Naive thymus-derived CD4-positive, alpha-beta T cell (primary cell): ENCODE measurements at regions of chr17 and their contacts with region 1.

Region 1: GRCh38 chr17:33964344-33964979 is 290.6 kb upstream of the CCL2 start:
- DNase-seq: peak in 3 of 9 donors; percentile 2 to 16 (median 6)
- ATAC-seq: peak; percentile 72
- H3K4me3 ChIP-seq: peak overlapping the region; percentile 41
- H3K4me3 Mint-ChIP-seq: peak overlapping the region in 9 of 10 donors; percentile 44 to 76 (median 58)
- H3K27ac ChIP-seq: no peak overlapping the region
- H3K27ac Mint-ChIP-seq: peak overlapping the region in 3 of 9 donors; percentile 23 to 74 (median 63)
- H3K4me1 ChIP-seq: peaks cover 12 to 23% of the 10 kb centered on the region in 2 donors
- H3K4me1 Mint-ChIP-seq: peaks cover 18 to 55% (median 24%) of the 10 kb centered on the region in 7 donors
- H3K27me3 ChIP-seq: no peaks in the 10 kb centered on the region
- H3K27me3 Mint-ChIP-seq: peaks cover 8 to 16% (median 10%) of the 10 kb centered on the region in 5 donors

Region 2: DNA sequence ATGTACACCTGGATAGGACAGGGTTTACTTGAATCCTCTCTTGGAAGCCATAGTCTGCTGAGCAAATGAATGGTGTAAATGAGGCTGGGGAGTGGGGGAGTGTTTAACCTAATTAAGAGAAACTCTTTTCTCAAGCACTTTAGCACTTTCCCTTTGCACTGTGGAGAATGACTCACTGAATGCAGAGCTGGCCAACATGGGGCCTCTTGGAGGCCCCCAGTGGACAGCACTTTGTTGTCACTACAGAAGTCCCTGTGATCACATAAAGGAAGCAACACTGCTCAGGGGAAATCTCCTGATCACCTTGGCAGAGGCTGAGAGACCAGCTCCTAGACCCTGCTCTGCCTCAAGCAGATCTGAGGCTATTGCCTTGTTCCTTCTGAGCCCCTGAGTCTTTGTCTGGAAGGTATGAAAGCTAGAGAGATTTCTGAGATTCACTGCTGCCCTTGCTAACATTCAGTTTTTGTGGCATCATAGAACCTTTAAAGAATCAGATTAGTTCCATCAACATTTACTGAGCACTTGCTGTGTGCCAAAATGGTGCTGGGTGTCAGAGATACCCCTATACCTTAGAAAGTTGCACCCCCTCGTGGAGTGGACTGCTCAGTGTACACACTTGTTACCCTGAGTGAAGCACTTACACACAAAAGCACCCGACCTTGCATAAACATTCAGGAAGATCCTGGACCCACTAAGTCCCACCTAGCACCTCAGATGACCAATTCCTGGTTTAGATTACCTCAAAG is 60.5 kb after region 1 on chr17:
- CTCF ChIA-PET with region 1: no interaction called
- POLR2A ChIA-PET with region 1: no interaction called
- intact Hi-C with region 1: loop called in 1 of 2 experiments (anchors 10 kb)
- DNase-seq: no peak
- ATAC-seq: no peak
- H3K4me3 ChIP-seq: no peak overlapping the region
- H3K4me3 Mint-ChIP-seq: no peak overlapping the region
- H3K27ac ChIP-seq: no peak overlapping the region
- H3K27ac Mint-ChIP-seq: no peak overlapping the region
- H3K4me1 ChIP-seq: no peaks in the 10 kb centered on the region
- H3K4me1 Mint-ChIP-seq: no peaks in the 10 kb centered on the region
- H3K27me3 ChIP-seq: no peaks in the 10 kb centered on the region
- H3K27me3 Mint-ChIP-seq: peaks cover 4 to 40% (median 20%) of the 10 kb centered on the region in 5 donors

Region 3: DNA sequence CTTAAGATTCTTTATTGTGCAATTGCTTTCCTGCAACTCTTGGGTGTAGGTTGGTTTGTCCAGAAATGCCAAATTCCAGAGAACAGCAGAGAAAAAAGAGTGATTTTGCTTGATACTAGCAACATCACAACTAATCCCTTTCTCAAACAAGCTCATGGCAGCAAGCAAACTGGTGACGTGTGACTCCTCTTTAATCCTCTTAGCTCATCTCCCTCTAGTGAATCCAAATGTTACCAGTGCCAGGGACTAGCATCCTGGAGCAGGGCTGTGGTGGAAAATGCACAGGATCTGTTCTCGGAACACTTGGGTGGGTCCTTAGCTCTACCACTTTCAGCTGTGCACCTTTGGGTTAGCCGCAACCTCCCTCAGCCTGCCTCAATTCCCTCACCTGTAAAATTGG is 86.6 kb after region 1 on chr17:
- CTCF ChIA-PET with region 1: no interaction called
- POLR2A ChIA-PET with region 1: no interaction called
- intact Hi-C with region 1: no loop called
- DNase-seq: no peak
- ATAC-seq: no peak
- H3K4me3 ChIP-seq: no peak overlapping the region
- H3K4me3 Mint-ChIP-seq: no peak overlapping the region
- H3K27ac ChIP-seq: no peak overlapping the region
- H3K27ac Mint-ChIP-seq: no peak overlapping the region
- H3K4me1 ChIP-seq: no peaks in the 10 kb centered on the region
- H3K4me1 Mint-ChIP-seq: peaks cover 0 to 2% (median 0%) of the 10 kb centered on the region in 7 donors
- H3K27me3 ChIP-seq: no peaks in the 10 kb centered on the region
- H3K27me3 Mint-ChIP-seq: peaks cover 0 to 29% (median 22%) of the 10 kb centered on the region in 5 donors

Region 4: DNA sequence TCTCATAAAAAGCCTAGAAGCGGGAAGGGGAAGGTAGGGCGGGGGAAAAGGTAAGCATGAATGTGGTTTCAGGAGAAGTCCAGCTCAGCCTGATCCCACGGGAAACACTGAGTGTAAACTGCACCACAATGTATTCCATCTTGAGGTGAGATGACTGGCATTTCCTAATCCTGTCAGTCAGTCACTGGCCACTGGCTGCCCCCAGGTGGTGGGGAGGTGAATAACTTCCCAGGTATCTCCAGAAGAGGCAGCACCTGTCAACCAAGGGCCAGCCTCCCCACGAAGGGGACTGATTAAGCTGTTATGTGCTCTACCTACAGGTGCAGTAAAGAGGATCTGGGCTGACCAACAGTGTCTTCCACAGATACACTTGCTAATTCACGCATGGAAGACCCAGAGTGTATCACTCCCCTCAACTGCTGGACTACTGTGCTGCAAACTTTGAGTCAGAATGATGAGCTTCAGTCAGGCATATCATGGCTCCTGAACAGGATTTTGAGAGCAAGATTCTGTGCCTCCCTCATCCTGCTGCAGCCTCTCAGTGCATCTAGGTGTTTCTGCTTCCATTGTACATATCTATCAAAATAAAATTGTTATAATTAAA is 182.1 kb after region 1 on chr17:
- CTCF ChIA-PET with region 1: no interaction called
- POLR2A ChIA-PET with region 1: no interaction called
- intact Hi-C with region 1: loop called in 1 of 2 experiments (anchors 1 kb)
- DNase-seq: peak in 7 of 9 donors; percentile 3 to 59 (median 15)
- ATAC-seq: no peak
- H3K4me3 ChIP-seq: no peak overlapping the region
- H3K4me3 Mint-ChIP-seq: no peak overlapping the region
- H3K27ac ChIP-seq: no peak overlapping the region
- H3K27ac Mint-ChIP-seq: no peak overlapping the region
- H3K4me1 ChIP-seq: no peaks in the 10 kb centered on the region
- H3K4me1 Mint-ChIP-seq: no peaks in the 10 kb centered on the region
- H3K27me3 ChIP-seq: no peaks in the 10 kb centered on the region
- H3K27me3 Mint-ChIP-seq: peaks cover 9 to 42% (median 17%) of the 10 kb centered on the region in 5 donors